GM10248 (cell line): ENCODE measurements at regions of chr4 and their contacts with region 1.

Region 1: GRCh38 chr4:130336585-130337217 is 1240.7 kb downstream of the C4orf33 start:
- DNase-seq: no peak
- CTCF ChIP-seq: peak; percentile 57

Region 2: DNA sequence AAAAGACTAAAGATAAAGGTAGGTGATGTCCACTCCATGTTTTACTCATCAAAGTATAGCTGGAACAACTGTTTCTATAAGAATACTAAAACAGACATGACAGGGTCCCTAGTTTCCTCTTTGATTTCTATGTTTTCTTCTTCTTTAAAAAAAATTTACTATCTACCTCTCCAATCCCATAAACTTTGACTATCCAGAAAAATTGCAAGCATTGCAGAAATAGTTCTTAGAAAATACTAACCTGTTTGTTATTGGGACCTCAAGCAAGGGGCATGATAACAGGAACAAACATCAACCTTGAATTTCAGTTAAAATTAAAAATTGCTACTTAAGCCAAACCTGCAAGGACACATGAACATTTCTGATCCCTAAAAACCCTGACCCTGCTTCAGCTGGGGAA is 14.3 kb before region 1 on chr4:
- CTCF ChIA-PET with region 1: interaction called, 10 read pairs
- POLR2A ChIA-PET with region 1: no interaction called
- DNase-seq: no peak
- CTCF ChIP-seq: no peak

Region 3: GRCh38 chr4:130349745-130350144 is 13.0 kb after region 1 on chr4:
- CTCF ChIA-PET with region 1: interaction called, 15 read pairs
- POLR2A ChIA-PET with region 1: no interaction called
- DNase-seq: no peak
- CTCF ChIP-seq: no peak